ENCODE measurements at regions of chr16 and their contacts with region 1.

Region 1: DNA sequence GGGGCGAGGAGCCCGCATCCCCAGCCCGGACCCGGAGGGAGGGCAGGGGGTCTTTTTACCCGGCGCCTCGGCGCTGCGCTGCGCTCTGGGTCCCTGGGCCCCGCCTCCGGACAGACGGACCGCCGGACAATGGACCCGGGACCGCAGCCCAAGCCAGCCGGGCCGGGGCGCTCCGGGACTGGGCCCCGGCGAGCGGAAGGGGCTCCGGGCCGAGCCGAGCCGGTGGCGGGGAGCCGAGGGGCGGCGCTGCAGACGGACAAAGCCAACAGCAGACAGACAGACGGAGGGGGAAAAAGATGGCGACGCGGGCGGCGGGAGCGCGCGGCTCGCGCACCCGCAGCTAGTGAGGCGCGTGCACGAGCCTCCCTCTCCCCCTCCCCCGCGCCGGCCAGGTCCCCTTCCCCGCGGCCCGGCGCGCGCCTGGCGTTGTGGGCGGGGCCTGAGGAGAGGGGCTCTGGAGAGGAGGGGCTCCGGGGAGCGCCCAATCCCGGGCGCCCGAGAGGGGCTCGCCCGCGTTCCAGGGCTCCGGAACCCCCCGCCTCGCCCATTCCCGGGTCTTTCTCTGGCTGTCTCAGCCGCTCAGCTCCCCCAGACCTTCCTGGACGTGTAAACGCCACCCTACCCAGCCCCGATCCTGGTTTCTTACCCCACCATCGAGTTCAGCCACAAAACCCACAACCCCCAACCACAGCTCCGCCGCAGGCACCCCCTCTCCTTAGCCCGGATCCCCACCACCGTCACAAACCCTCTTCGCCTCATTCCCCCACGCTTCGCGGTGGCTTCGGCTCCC is at the start of gene ZNF821:
- DNase-seq: peak; percentile 87 to 90 (median 90)
- H3K4me3 ChIP-seq: peak within 1 kb of the TSS; percentile 67 to 87 (median 85)
- H3K27ac ChIP-seq: peak within 1 kb of the TSS in 1 of 2 experiments; percentile 58
- H3K4me1 ChIP-seq: peaks cover 30 to 53% (median 41%) of the 10 kb centered on the region in 4 experiments
- H3K27me3 ChIP-seq: no peaks in the 10 kb centered on the region

Region 2: GRCh38 chr16:71853413-71853812 is 30.6 kb before region 1 on chr16:
- CTCF ChIA-PET with region 1: interaction called, 16 read pairs
- POLR2A ChIA-PET with region 1: no interaction called
- DNase-seq: no peak
- H3K4me3 ChIP-seq: no peak overlapping the region
- H3K27ac ChIP-seq: no peak overlapping the region
- H3K4me1 ChIP-seq: no peaks in the 10 kb centered on the region
- H3K27me3 ChIP-seq: no peaks in the 10 kb centered on the region

Region 3: GRCh38 chr16:71870818-71871217 is 13.2 kb before region 1 on chr16:
- CTCF ChIA-PET with region 1: interaction called, 13 read pairs
- POLR2A ChIA-PET with region 1: no interaction called
- DNase-seq: no peak
- H3K4me3 ChIP-seq: no peak overlapping the region
- H3K27ac ChIP-seq: no peak overlapping the region
- H3K4me1 ChIP-seq: no peaks in the 10 kb centered on the region
- H3K27me3 ChIP-seq: no peaks in the 10 kb centered on the region

Region 4: GRCh38 chr16:71894921-71895678 is 11.1 kb after region 1 on chr16 and contains the start of gene IST1:
- CTCF ChIA-PET with region 1: interaction called, 67 read pairs
- POLR2A ChIA-PET with region 1: interaction called, 8 read pairs
- DNase-seq: peak; percentile 98 to 99 (median 99)
- H3K4me3 ChIP-seq: peak within 1 kb of the TSS; percentile 85 to 99 (median 96)
- H3K27ac ChIP-seq: peak within 1 kb of the TSS; percentile 91 to 98
- H3K4me1 ChIP-seq: peaks cover 8 to 35% (median 26%) of the 10 kb centered on the region in 4 experiments
- H3K27me3 ChIP-seq: no peaks in the 10 kb centered on the region

Region 5: DNA sequence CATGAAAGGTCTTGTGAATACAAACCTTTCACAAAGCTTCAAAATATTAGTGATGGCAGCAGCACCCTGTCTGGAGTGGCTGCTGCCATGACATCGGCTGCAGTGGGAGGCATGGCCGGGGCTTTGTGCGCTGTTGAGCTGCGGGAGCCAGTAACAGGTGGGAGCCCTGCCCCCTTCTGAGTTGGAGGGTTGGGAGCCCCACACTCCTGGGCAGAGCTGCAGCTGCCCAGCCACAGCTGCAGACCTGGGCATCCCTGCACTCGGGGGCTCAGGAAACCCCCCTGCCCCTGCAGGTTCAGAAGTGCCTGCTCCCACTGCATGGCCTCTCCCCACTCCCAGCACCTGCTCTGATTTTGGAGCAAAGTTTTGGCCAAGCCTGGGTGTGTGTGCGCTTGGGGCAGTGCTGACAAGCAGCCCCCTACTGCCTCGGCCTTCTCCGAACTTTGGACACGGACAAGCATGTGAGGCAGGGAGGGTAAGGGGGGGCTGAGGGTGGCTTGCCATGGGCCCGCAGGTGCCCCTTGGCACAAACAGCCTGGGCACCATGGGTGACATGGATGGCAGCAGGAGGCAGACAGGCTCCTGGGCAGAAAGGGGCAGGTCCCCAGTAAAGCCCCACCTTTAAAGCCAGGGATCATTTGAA is 53.9 kb after region 1 on chr16:
- CTCF ChIA-PET with region 1: no interaction called
- POLR2A ChIA-PET with region 1: no interaction called
- DNase-seq: no peak
- H3K4me3 ChIP-seq: no peak overlapping the region
- H3K27ac ChIP-seq: no peak overlapping the region
- H3K4me1 ChIP-seq: no peaks in the 10 kb centered on the region
- H3K27me3 ChIP-seq: no peaks in the 10 kb centered on the region

Region 6: DNA sequence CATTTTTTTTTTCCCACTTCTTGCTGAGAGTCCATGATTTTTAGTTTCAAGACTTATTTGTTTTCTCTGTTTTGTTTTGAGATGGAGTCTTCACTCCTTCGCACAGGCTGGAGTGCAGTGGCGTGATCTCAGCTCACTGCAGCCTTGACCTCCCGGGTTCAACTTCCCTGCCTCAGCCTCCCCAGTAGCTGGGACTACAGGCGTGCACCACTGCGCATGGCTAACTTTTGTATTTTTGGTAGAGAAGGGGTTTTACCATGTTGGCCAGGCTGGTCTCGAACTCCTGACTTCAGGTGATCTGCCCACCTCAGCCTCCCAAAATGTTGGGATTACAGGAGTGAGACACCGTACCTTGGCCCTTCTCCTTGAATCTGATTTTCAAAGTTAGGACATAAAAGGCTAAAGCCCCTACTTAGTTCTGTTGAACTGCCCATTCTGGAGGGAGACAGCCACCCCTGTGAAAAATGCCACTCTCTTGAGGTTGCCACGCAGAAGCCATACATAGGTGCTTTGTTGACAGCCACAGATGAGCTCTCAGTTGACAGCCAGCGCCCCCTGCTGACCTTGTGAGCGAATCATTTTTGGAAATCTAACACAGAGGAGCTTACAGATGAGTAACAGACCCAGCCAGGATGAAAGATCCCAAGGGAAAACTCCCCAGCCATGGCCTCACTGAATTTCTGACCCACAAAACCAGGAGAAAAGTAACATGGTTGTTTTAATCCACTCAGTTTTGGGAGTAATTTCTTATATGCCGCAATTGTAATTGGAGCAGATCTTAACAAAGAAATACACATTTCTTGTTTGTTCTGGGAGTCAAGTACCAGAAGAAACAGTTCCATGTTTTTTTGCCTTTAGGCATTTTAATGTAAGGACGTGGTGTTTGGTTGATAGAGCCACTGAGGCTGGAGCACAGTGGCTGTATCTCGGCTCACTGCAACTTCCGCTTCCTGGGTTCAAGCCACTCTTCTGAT is 77.3 kb after region 1 on chr16:
- CTCF ChIA-PET with region 1: interaction called, 18 read pairs
- POLR2A ChIA-PET with region 1: no interaction called
- DNase-seq: peak; percentile 79 to 88 (median 84)
- H3K4me3 ChIP-seq: no peak overlapping the region
- H3K27ac ChIP-seq: no peak overlapping the region
- H3K4me1 ChIP-seq: peaks cover 0 to 3% (median 0%) of the 10 kb centered on the region in 4 experiments
- H3K27me3 ChIP-seq: no peaks in the 10 kb centered on the region